Activated CD4-positive, alpha-beta memory T cell treated with anti-CD3 and anti-CD28 coated beads, Interleukin-2, amount 10 ng/mL, durations not matched to agents 7 days and 5 days (primary cell): ENCODE measurements at regions of chr15 and their contacts with region 1.

Region 1: GRCh38 chr15:43118829-43119228 is 13.0 kb upstream of the UBR1 start:
- DNase-seq: no peak
- H3K4me3 Mint-ChIP-seq: no peak overlapping the region
- H3K27ac Mint-ChIP-seq: no peak overlapping the region
- H3K4me1 Mint-ChIP-seq: peaks cover 22% of the 10 kb centered on the region
- H3K27me3 Mint-ChIP-seq: peaks cover 25% of the 10 kb centered on the region

Region 2: GRCh38 chr15:43105778-43106485 is 12.9 kb before region 1 on chr15 and contains the start of gene UBR1:
- CTCF ChIA-PET with region 1: interaction called, 5 read pairs
- POLR2A ChIA-PET with region 1: interaction called, 11 read pairs
- DNase-seq: peak; percentile 93
- H3K4me3 Mint-ChIP-seq: peak within 1 kb of the TSS; percentile 96
- H3K27ac Mint-ChIP-seq: peak within 1 kb of the TSS; percentile 89
- H3K4me1 Mint-ChIP-seq: peaks cover 43% of the 10 kb centered on the region
- H3K27me3 Mint-ChIP-seq: no peaks in the 10 kb centered on the region
- total RNA-seq, gene UBR1: 41.8 to 42.4 TPM